ENCODE measurements at regions of chr4 and their contacts with region 1.

Region 1: GRCh38 chr4:37737466-37737865 is 51.3 kb upstream of the RELL1 start:
- DNase-seq: peak in 1 of 2 experiments; percentile 61
- H3K4me3 ChIP-seq: no peak overlapping the region
- H3K27ac ChIP-seq: no peak overlapping the region
- H3K4me1 ChIP-seq: peaks cover 12% of the 10 kb centered on the region
- H3K27me3 ChIP-seq: no peaks in the 10 kb centered on the region
- CTCF ChIP-seq: no peak

Region 2: GRCh38 chr4:37516057-37516775 is 221.2 kb before region 1 on chr4:
- CTCF ChIA-PET with region 1: no interaction called
- POLR2A ChIA-PET with region 1: interaction called, 10 read pairs
- intact Hi-C with region 1: no loop called
- DNase-seq: no peak
- H3K4me3 ChIP-seq: no peak overlapping the region
- H3K27ac ChIP-seq: no peak overlapping the region
- H3K4me1 ChIP-seq: no peaks in the 10 kb centered on the region
- H3K27me3 ChIP-seq: no peaks in the 10 kb centered on the region
- CTCF ChIP-seq: no peak